Sciatic nerve (tissue), 2 donors: ENCODE measurements at regions of chr4 and their contacts with region 1.

Region 1: DNA sequence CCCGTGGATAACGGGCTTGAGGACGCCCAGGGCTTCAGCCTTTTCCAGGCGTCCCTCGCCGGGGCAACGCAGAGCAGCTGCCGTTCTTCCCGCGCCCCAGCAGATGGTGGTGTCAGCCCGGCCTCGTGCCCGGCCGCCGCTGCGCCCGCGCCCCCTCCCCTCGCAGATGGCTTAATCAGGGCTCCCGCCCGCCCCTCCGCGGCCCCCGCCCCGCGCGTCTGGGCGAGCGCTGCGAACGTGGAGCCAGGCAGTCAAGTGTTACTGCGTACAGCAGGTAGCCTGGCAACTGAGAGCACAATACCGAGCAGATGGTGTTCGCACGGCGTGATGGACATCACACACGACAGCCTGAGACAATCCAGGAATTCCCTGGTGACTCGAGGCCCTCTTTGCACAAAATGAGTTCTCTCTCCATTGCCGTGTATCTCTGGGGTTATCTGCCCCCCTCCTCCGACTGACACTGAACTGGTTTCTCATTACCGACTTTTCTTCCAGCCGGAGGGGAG is 69.3 kb downstream of the MGST2 start:
- DNase-seq: peak; percentile 93
- ATAC-seq: peak; percentile 95

Region 2: DNA sequence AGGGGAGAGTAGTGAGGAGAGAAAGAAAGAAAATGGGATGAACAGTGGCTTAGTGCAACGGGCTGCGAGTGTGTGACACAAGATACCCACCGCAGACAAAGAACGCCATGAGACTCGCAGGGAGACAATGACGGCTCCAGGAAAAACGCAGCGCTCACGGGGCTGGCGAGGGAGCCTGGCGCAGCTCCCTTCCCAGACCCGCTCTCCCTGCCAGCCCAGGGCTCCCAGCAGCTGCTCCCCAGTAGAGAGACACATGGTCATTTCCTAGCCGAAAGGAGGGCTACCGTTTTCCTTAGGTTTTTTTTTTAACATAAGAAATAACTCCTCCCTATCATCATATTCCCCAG is 269.6 kb after region 1 on chr4:
- intact Hi-C with region 1: loop called (anchors 10 kb)
- DNase-seq: peak; percentile 68
- ATAC-seq: peak; percentile 92

Region 3: DNA sequence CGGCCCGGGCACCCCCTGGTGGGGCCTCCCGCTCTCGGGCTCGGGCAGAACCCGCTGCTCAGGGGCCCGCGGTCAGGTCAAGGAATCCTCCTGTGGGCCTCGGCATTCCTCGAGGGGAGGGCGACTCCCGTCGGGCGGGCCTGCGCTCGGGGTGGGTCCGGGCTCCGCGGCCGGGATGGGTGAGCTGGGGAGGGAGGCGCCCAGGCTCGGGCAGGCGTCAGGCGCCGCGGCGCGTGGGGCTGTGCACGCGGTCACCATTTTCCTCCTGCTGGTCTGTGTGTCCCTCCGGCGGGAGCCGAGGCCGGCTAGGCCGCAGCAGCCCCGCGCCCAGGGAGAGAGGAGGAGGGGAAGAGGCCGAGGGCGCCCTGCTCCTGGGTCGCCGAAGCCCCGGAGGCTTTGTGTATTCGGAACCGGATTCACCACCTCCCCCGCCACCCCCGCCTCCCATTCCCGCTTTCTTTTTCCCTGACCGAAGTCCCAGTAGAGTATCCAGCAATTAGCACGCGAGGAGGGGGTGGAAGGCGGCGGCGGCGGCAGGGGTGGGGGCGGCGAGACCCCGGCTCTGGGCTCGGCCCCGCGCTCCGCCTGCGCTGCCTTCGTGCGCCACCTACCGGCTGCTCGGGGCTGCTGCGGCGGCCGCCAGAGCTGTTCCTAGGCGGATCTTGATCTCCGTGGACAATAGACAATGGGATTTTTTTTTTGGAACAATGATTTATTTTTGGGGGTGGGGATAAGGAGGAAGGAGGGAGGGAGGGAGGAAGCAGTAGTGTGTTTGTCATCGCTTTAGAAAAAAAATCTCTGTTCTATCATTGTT is 518.0 kb after region 1 on chr4:
- intact Hi-C with region 1: loop called (anchors 5 kb)
- DNase-seq: peak; percentile 88
- ATAC-seq: peak; percentile 90